ENCODE measurements at regions of chr20 and their contacts with region 1.

Region 1: GRCh38 chr20:63370618-63371187 is 9.6 kb upstream of the CHRNA4 start:
- DNase-seq: no peak
- H3K4me3 ChIP-seq: no peak overlapping the region
- H3K27me3 ChIP-seq: peaks cover 6% of the 10 kb centered on the region; the same call in 1 of the 2 replicates
- CTCF ChIP-seq: no peak

Region 2: DNA sequence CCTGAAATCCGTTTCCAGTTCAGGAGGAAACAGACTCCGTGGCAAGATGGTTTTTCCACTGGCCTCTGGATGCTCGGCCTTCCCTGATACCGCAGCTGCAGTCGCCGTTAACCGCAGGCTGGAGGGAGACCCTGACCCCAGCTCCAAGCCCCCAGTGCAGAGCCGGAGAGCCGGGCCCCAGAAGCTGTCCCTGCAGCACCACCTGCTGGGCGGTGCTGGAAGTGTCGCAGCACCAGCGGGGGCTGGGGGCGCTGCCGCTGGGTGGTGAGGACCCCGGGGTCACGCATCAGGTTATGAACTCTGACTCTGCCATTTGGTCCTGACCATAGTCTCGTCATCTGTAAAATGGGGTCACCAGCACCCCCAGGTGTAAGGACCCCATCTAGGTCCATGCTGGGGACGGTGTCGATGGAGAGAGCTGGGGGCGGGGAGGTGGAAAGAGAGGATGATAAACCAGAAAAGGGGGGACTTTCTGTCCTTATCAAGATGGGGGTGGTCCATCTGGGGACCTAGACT is 11.2 kb after region 1 on chr20:
- CTCF ChIA-PET with region 1: interaction called, 11 read pairs
- POLR2A ChIA-PET with region 1: no interaction called
- DNase-seq: no peak
- H3K4me3 ChIP-seq: no peak overlapping the region
- H3K27me3 ChIP-seq: peaks cover 2% of the 10 kb centered on the region; the same call in 1 of the 2 replicates
- CTCF ChIP-seq: peak; percentile 96

Region 3: GRCh38 chr20:63394069-63394919 is 23.6 kb after region 1 on chr20:
- CTCF ChIA-PET with region 1: no interaction called
- POLR2A ChIA-PET with region 1: no interaction called
- DNase-seq: no peak
- H3K4me3 ChIP-seq: no peak overlapping the region
- H3K27me3 ChIP-seq: no peaks in the 10 kb centered on the region
- CTCF ChIP-seq: no peak

Measured in BJ (cell line).